SK-N-SH (cell line): ENCODE measurements at regions of chr14 and their contacts with region 1.

Region 1: GRCh38 chr14:23057757-23058653 is 685 bp upstream of the CDH24 start:
- DNase-seq: peak; percentile 92
- H3K4me3 ChIP-seq: peak overlapping the region; percentile 62 to 82
- H3K27ac ChIP-seq: peak overlapping the region; percentile 62 to 90; a peak in 3 of 4 replicates
- H3K4me1 ChIP-seq: peaks cover 27 to 28% of the 10 kb centered on the region in 2 experiments; a peak in 3 of 4 replicates
- H3K27me3 ChIP-seq: no peaks in the 10 kb centered on the region
- CTCF ChIP-seq: peak; percentile 94
- EP300 ChIP-seq: no peak
- RAD21 ChIP-seq: peak; percentile 81

Region 2: GRCh38 chr14:22872033-22872832 is 185.8 kb before region 1 on chr14:
- CTCF ChIA-PET with region 1: no interaction called
- POLR2A ChIA-PET with region 1: no interaction called
- DNase-seq: peak; percentile 83
- H3K4me3 ChIP-seq: peak overlapping the region; percentile 77 to 93
- H3K27ac ChIP-seq: peak overlapping the region; percentile 83 to 87
- H3K4me1 ChIP-seq: peaks cover 8 to 17% of the 10 kb centered on the region in 2 experiments
- H3K27me3 ChIP-seq: no peaks in the 10 kb centered on the region
- CTCF ChIP-seq: peak; percentile 97
- EP300 ChIP-seq: no peak
- RAD21 ChIP-seq: peak; percentile 79

Region 3: DNA sequence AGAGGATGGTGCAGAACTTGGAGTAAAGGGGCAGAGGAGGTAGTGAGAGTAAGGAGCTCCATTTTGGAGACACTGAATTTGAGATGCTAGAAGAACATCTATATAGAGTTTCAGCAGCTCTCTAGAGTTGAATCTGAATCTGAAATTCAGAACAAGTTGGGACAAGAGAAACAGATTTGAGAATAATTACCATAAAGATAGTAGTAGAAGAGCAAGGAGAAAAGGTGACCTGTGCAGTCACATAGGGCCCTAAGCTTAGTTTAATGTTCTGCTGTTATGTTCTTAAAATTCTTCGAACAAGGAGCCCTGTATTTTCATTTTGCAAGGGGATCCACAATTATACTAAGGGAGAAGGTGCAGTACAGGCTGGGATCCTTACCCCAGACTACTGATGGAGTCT is 167.6 kb before region 1 on chr14:
- CTCF ChIA-PET with region 1: no interaction called
- POLR2A ChIA-PET with region 1: no interaction called
- DNase-seq: no peak
- H3K4me3 ChIP-seq: no peak overlapping the region
- H3K27ac ChIP-seq: no peak overlapping the region
- H3K4me1 ChIP-seq: peaks cover 8 to 19% of the 10 kb centered on the region in 2 experiments; a peak in 2 of 4 replicates
- H3K27me3 ChIP-seq: no peaks in the 10 kb centered on the region
- CTCF ChIP-seq: no peak
- EP300 ChIP-seq: no peak
- RAD21 ChIP-seq: no peak

Region 4: GRCh38 chr14:22966783-22967269 is 91.2 kb before region 1 on chr14:
- CTCF ChIA-PET with region 1: interaction called, 1,566 read pairs
- POLR2A ChIA-PET with region 1: no interaction called
- DNase-seq: no peak
- H3K4me3 ChIP-seq: no peak overlapping the region
- H3K27ac ChIP-seq: no peak overlapping the region
- H3K4me1 ChIP-seq: no peaks in the 10 kb centered on the region
- H3K27me3 ChIP-seq: no peaks in the 10 kb centered on the region
- CTCF ChIP-seq: no peak
- EP300 ChIP-seq: no peak
- RAD21 ChIP-seq: no peak

Region 5: DNA sequence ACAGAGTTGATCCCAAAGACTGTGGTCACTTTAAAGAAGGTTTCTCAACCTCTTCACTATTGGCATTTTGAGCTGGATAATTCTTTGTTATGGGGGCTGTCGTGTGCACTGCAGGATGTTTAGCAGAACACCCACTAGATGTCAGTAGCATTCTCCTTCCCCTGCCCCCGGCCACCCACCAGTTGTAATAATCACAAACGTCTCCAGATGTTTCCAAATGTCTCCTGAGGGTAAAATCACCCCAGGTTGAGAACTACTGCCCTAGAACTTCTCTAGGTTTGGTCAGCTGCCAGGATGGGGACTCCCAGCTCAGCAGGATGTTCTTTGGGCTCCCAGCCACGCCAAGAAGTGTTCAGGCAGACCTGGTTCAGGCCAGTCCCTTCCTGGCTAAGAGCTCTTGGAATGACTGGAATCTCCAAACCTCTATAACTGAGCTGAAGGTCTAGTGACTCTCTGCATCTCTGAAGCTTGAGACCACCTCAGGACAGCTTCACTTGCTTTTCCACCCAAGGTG is 63.2 kb before region 1 on chr14:
- CTCF ChIA-PET with region 1: interaction called, 1,566 read pairs
- POLR2A ChIA-PET with region 1: interaction called, 18 read pairs
- DNase-seq: peak; percentile 77
- H3K4me3 ChIP-seq: no peak overlapping the region; a peak in 1 of 4 replicates
- H3K27ac ChIP-seq: no peak overlapping the region
- H3K4me1 ChIP-seq: peaks cover 4 to 25% of the 10 kb centered on the region in 2 experiments; a peak in 3 of 4 replicates
- H3K27me3 ChIP-seq: no peaks in the 10 kb centered on the region
- CTCF ChIP-seq: peak; percentile 70
- EP300 ChIP-seq: no peak
- RAD21 ChIP-seq: peak; percentile 83

Region 6: DNA sequence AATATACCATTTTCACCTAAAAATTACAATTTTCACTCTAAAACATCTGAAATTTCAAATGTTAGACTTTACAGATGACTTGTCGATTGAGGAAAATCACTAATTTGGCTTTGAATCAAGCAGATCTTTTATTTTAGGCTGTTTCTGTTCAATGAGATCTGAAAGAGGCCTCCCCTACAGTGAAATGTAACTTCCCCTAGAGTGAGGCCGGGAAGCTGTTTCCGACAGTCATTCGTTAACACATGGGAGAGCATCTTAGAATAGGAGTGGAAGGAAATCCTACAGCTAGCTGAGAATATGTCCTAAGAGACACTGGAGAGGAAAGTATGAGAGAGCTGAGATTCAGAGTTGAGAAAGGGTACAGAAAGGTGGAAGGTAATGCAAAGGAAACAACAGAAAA is 42.4 kb before region 1 on chr14:
- CTCF ChIA-PET with region 1: interaction called, 12 read pairs
- POLR2A ChIA-PET with region 1: interaction called, 4 read pairs
- DNase-seq: no peak
- H3K4me3 ChIP-seq: no peak overlapping the region
- H3K27ac ChIP-seq: no peak overlapping the region
- H3K4me1 ChIP-seq: peaks cover 0 to 11% of the 10 kb centered on the region in 2 experiments; a peak in 1 of 4 replicates
- H3K27me3 ChIP-seq: no peaks in the 10 kb centered on the region
- CTCF ChIP-seq: no peak
- EP300 ChIP-seq: no peak
- RAD21 ChIP-seq: no peak

Region 7: DNA sequence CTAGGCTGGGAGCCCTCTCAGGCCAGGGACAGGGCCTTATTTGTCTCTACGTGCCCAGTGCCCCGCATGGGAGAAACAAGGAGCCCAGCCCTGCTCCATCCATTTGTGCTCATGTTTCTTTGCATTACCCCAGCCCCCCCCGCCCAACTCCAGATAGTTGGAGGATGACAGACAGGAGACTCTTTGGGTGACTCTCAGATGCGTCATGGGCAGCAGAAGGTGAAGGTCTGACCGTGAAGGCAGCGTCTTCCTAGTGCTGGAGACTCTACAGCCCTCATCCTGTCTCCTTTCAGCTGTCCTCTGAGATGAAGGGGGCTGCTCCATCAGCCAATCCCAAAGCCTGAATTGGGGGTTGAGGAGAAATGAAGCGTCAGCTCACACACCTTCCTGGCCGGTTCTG is 16.3 kb before region 1 on chr14:
- CTCF ChIA-PET with region 1: interaction called, 20 read pairs
- POLR2A ChIA-PET with region 1: interaction called, 3 read pairs
- DNase-seq: no peak
- H3K4me3 ChIP-seq: no peak overlapping the region
- H3K27ac ChIP-seq: 0 out of 4 replicates have a peak overlapping the region, but pooled peaks of 1 of the 2 experiments have one; percentile 14
- H3K4me1 ChIP-seq: peaks cover 0 to 9% of the 10 kb centered on the region in 2 experiments; a peak in 1 of 4 replicates
- H3K27me3 ChIP-seq: no peaks in the 10 kb centered on the region
- CTCF ChIP-seq: no peak
- EP300 ChIP-seq: no peak
- RAD21 ChIP-seq: no peak

Region 8: GRCh38 chr14:23068476-23069412 is 10.7 kb after region 1 on chr14:
- CTCF ChIA-PET with region 1: interaction called, 152 read pairs
- POLR2A ChIA-PET with region 1: interaction called, 5 read pairs
- DNase-seq: peak; percentile 89
- H3K4me3 ChIP-seq: peak overlapping the region in 1 of 2 experiments; percentile 50; a peak in 1 of 4 replicates
- H3K27ac ChIP-seq: peak overlapping the region; percentile 35 to 40; a peak in 3 of 4 replicates
- H3K4me1 ChIP-seq: peaks cover 20 to 35% of the 10 kb centered on the region in 2 experiments
- H3K27me3 ChIP-seq: no peaks in the 10 kb centered on the region
- CTCF ChIP-seq: peak; percentile 99
- EP300 ChIP-seq: no peak
- RAD21 ChIP-seq: peak; percentile 77

Region 9: GRCh38 chr14:23141671-23142451 is 83.9 kb after region 1 on chr14:
- CTCF ChIA-PET with region 1: no interaction called
- POLR2A ChIA-PET with region 1: no interaction called
- DNase-seq: peak; percentile 39
- H3K4me3 ChIP-seq: no peak overlapping the region
- H3K27ac ChIP-seq: no peak overlapping the region
- H3K4me1 ChIP-seq: no peaks in the 10 kb centered on the region; a peak in 1 of 4 replicates
- H3K27me3 ChIP-seq: no peaks in the 10 kb centered on the region; the same call in 1 of the 2 replicates
- CTCF ChIP-seq: no peak
- EP300 ChIP-seq: no peak
- RAD21 ChIP-seq: no peak